ENCODE measurements at regions of chr5 and their contacts with region 1.

Region 1: DNA sequence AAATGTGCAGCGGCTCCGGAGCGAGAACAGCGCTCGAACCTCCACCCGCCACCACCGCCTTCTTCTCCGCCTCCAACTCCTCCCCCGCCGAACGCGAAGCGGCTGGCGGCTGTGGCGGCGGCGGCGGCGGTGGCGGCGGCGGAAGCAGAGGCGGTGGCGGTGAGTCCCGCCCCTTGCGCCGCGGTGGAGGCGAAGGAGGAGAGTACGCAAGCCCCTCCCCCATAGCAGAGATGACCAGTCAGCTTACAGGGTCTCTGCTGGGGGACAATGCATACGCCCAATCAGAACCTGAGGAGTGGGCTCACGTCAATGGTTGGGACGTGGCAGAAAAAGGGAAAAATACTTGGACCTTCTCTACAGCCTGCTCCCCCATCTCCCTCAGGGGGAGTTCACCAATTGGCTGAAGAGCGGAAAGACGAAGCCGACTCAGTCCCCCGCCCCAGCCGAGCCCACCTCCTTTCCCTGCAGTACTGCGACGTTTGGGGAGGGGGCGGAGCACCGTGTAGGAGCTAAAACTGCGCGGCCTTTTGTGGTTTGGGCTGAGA is at the start of gene PJA2:
- DNase-seq: peak; percentile 98
- H3K4me3 Mint-ChIP-seq: peak within 1 kb of the TSS; percentile 89
- H3K27ac Mint-ChIP-seq: peak within 1 kb of the TSS; percentile 97
- H3K4me1 Mint-ChIP-seq: peaks cover 37% of the 10 kb centered on the region
- H3K27me3 Mint-ChIP-seq: no peaks in the 10 kb centered on the region
- total RNA-seq, gene PJA2: 57.3 to 58.5 TPM

Region 2: GRCh38 chr5:108748401-108749127 is 661.4 kb before region 1 on chr5:
- CTCF ChIA-PET with region 1: no interaction called
- POLR2A ChIA-PET with region 1: no interaction called
- intact Hi-C with region 1: loop called (anchors 1 kb)
- DNase-seq: peak; percentile 98
- H3K4me3 Mint-ChIP-seq: peak overlapping the region; percentile 94
- H3K27ac Mint-ChIP-seq: peak overlapping the region; percentile 88
- H3K4me1 Mint-ChIP-seq: peaks cover 9% of the 10 kb centered on the region
- H3K27me3 Mint-ChIP-seq: peaks cover 3% of the 10 kb centered on the region

Region 3: GRCh38 chr5:109390188-109390587 is 19.7 kb before region 1 on chr5:
- CTCF ChIA-PET with region 1: no interaction called
- POLR2A ChIA-PET with region 1: interaction called, 3 read pairs
- intact Hi-C with region 1: loop called (anchors 2 kb)
- DNase-seq: no peak
- H3K4me3 Mint-ChIP-seq: no peak overlapping the region
- H3K27ac Mint-ChIP-seq: no peak overlapping the region
- H3K4me1 Mint-ChIP-seq: peaks cover 71% of the 10 kb centered on the region
- H3K27me3 Mint-ChIP-seq: no peaks in the 10 kb centered on the region

Region 4: DNA sequence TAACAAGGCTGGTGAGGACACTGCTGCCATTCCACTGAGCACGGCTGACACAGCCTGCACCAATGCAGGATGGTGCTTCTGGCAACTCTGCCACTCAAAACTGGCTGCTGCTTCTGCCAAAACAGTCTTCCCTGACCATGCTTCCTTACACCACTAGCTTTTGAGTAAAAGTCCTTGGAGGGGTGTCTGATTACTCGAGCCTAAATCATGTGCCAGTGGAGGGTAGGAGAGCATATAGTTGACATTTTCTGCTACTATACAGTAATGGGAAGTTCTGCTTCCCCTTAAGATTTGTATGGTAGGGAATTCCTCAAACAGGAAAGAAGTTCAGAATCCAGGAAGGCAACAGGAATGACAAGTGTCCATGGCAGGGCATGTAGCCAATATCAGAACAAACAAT is 12.0 kb after region 1 on chr5:
- CTCF ChIA-PET with region 1: no interaction called
- POLR2A ChIA-PET with region 1: no interaction called
- intact Hi-C with region 1: no loop called
- DNase-seq: no peak
- H3K4me3 Mint-ChIP-seq: no peak overlapping the region
- H3K27ac Mint-ChIP-seq: no peak overlapping the region
- H3K4me1 Mint-ChIP-seq: no peaks in the 10 kb centered on the region
- H3K27me3 Mint-ChIP-seq: peaks cover 11% of the 10 kb centered on the region

Region 5: DNA sequence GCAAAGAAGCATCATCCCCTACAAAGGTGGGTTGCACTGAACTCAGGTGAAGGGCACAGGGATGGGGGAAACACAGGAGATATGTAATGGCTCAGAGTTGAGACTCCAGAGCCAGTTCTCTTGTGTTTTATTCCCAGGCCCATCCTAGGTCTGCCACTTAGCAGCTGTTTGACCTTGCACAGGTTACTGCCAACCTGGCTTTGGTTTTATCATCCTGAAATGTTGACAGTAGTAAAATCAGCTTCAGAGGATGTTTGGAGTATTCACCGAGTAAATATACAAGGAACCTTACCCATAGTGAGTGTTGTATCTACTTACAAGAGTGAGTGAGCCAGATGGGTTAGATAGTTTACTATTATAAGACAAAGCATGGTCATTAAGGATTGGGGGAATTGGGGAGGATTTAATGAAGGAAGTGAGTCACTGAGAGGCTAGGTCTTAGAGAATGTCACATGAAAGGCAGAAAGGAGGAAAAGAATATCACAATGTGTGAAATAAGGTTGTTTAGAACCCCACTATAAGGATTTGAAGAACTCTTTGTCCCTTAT is 421.1 kb after region 1 on chr5:
- CTCF ChIA-PET with region 1: no interaction called
- POLR2A ChIA-PET with region 1: no interaction called
- intact Hi-C with region 1: no loop called
- DNase-seq: no peak
- H3K4me3 Mint-ChIP-seq: no peak overlapping the region
- H3K27ac Mint-ChIP-seq: no peak overlapping the region
- H3K4me1 Mint-ChIP-seq: peaks cover 5% of the 10 kb centered on the region
- H3K27me3 Mint-ChIP-seq: no peaks in the 10 kb centered on the region

Region 6: DNA sequence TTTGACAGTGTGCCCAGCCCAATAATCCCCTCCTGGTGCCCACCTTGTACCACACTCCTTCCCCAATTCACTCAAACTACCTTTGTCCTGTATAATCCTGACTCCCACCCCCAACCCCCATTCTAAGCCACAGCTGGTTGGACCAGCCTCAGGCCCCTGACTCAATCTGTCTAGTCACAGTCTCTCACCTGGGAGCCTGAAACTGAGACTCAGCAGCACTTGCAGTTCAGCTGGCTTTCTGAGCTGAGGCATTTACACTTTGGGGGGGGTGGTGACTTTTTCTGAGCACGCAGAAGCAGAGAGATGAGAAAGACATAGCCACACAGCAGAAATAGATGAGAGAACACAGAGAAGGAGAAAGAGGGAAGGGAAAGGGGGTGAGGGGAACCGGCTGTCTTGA is 527.1 kb after region 1 on chr5:
- CTCF ChIA-PET with region 1: no interaction called
- POLR2A ChIA-PET with region 1: no interaction called
- intact Hi-C with region 1: loop called (anchors 1 kb)
- DNase-seq: peak; percentile 69
- H3K4me3 Mint-ChIP-seq: no peak overlapping the region
- H3K27ac Mint-ChIP-seq: peak overlapping the region; percentile 57
- H3K4me1 Mint-ChIP-seq: peaks cover 17% of the 10 kb centered on the region
- H3K27me3 Mint-ChIP-seq: peaks cover 1% of the 10 kb centered on the region

Region 7: DNA sequence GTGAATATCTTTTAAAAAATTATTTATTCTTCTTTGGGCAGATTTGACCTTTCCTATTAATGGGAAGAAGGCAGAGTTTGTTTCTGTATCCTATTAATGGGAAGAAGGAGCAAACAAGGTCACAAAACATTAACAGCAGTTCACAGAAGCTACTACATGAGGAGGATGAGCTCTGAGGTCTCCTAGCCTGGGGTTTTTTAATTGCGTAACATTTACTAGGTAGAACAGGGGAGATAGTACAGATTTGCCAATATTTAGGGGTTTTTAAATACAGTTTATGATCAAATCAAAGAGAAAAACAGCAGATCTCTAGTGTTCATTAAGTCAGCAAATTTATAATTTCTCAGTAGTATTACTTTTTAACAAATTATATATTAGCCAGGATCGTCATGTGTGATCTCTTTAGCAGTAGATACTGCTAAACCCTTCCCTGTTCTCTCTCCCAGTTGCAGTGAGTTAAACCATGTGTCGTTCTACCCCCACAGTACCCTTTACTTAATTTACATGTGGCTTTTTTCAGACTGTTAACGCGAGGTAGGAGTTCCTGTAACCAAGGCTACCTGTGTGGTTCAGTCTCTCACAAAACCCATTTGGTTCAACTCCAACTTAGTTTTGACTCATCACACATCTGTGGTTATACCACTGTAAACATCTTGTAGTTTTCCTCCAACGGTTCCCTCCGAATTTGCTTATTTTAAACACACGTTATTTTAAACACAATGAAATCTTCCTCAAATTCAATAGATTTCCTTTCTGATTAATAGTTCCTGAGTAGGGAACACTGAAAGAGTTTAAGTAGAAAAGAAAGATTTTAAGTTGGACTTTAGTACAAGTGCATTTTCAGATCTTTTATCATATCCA is 1342.2 kb after region 1 on chr5:
- CTCF ChIA-PET with region 1: no interaction called
- POLR2A ChIA-PET with region 1: no interaction called
- intact Hi-C with region 1: loop called (anchors 2 kb)
- DNase-seq: peak; percentile 50
- H3K4me3 Mint-ChIP-seq: peak overlapping the region; percentile 62
- H3K27ac Mint-ChIP-seq: peak overlapping the region; percentile 88
- H3K4me1 Mint-ChIP-seq: peaks cover 46% of the 10 kb centered on the region
- H3K27me3 Mint-ChIP-seq: no peaks in the 10 kb centered on the region